HEK293 (cell line): ENCODE measurements at regions of chr11 and their contacts with region 1.

Region 1: GRCh38 chr11:72471005-72471898 is 36.9 kb upstream of the CLPB start:
- H3K4me3 ChIP-seq: no peak overlapping the region
- H3K27ac ChIP-seq: no peak overlapping the region
- H3K4me1 ChIP-seq: no peaks in the 10 kb centered on the region
- CTCF ChIP-seq: peak; percentile 67

Region 2: GRCh38 chr11:72333661-72334060 is 137.6 kb before region 1 on chr11:
- CTCF ChIA-PET with region 1: no interaction called
- POLR2A ChIA-PET with region 1: no interaction called
- H3K4me3 ChIP-seq: no peak overlapping the region
- H3K27ac ChIP-seq: no peak overlapping the region
- H3K4me1 ChIP-seq: no peaks in the 10 kb centered on the region
- CTCF ChIP-seq: peak; percentile 27; the same call in 1 of the 2 replicates

Region 3: GRCh38 chr11:72454791-72455190 is 16.5 kb before region 1 on chr11:
- CTCF ChIA-PET with region 1: interaction called, 25 read pairs
- POLR2A ChIA-PET with region 1: no interaction called
- H3K4me3 ChIP-seq: no peak overlapping the region
- H3K27ac ChIP-seq: no peak overlapping the region
- H3K4me1 ChIP-seq: no peaks in the 10 kb centered on the region
- CTCF ChIP-seq: no peak

Region 4: GRCh38 chr11:72483412-72484186 is 12.3 kb after region 1 on chr11:
- CTCF ChIA-PET with region 1: interaction called, 25 read pairs
- POLR2A ChIA-PET with region 1: no interaction called
- H3K4me3 ChIP-seq: no peak overlapping the region
- H3K27ac ChIP-seq: no peak overlapping the region
- H3K4me1 ChIP-seq: no peaks in the 10 kb centered on the region
- CTCF ChIP-seq: no peak

Region 5: DNA sequence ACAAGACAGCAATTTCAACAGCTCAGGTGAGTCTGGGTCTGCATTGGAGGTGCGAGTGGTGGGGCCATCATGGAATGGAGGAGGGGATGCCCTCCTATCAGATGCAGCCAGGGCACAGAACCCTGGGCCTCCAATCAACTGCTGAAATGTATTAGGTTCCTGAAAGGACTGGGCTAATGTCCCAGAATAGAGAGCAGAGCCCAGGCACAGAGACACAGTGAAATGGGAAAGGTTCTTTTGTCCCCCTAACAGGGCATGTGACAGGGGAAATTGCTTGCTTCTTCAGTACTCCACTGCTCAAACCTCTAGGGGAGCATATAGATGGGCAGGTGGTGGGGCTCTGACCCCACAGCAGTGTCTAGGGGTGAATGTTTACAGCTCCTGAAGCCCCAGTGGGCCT is 50.4 kb after region 1 on chr11:
- CTCF ChIA-PET with region 1: interaction called, 13 read pairs
- POLR2A ChIA-PET with region 1: no interaction called
- H3K4me3 ChIP-seq: no peak overlapping the region
- H3K27ac ChIP-seq: no peak overlapping the region
- H3K4me1 ChIP-seq: no peaks in the 10 kb centered on the region
- CTCF ChIP-seq: no peak

Region 6: DNA sequence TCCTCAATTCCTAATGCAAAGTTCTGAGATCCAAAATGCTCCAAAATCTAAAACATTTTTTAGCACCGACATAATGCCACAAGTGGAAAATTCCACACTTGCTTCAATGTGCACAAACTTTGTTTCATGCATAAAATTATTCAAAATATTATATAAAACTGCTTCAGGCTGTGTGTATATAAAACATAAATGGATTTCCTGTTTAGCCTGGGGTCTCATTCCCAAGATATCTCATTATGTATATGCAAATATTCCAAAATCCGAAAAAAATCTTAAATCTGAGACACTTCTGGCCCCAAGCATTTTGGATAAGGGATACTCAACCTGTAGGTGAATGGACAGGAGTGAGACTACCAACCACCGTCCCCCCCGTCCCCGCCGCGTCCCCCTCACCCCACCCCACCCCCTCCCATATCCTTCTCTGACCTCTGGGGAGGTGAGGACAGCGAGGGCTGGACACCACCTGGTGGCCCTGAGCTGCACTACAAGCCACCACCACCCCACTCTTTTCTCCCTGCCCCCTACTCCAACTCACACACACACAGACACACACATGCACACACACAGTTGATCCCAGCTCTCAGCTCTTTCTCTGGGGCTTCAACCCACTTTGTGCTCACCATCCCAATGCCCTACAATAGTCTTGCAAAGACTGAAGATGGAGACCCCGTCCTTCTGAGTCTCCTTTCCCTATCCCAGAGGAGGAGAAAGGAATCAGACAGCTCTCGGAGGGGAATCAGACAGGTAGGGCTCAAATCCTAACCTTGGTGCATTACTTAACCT is 102.0 kb after region 1 on chr11:
- CTCF ChIA-PET with region 1: interaction called, 36 read pairs
- POLR2A ChIA-PET with region 1: no interaction called
- H3K4me3 ChIP-seq: no peak overlapping the region
- H3K27ac ChIP-seq: no peak overlapping the region
- H3K4me1 ChIP-seq: no peaks in the 10 kb centered on the region; the same call in 1 of the 2 replicates
- CTCF ChIP-seq: peak; percentile 54; the same call in 1 of the 2 replicates

Region 7: DNA sequence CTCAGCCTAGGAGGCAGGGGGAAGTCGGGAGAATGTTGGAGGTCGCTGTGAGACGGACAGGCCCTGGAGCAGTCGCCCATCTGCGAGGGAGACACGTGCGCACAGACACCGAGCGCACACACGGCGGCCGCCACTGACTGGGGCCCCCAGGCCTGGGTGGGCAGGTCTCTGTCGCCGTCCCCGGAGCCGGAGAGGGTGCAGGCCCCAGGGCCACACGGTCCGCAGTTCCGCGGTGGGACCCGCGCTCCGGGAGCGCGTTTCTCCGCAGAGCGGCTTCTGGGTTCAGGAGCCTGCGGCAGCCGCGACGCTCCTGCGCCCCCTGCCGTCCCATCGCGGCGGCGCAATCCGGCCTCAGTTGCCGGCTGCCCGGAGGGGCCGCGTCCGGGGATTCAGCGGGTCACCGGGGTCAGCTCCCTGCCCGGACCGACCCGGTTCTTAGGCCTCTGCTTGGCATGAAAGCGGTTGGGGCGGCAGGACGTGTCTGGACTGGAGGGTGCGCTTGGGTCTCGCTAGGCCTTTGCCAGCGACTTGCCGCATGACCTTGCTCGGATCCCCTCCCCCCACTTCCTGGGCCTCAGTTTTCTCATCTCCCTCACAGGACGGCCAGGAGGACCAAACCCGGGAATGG is 171.7 kb after region 1 on chr11:
- CTCF ChIA-PET with region 1: interaction called, 11 read pairs
- POLR2A ChIA-PET with region 1: no interaction called
- H3K4me3 ChIP-seq: peak overlapping the region; percentile 39
- H3K27ac ChIP-seq: no peak overlapping the region
- H3K4me1 ChIP-seq: no peaks in the 10 kb centered on the region
- CTCF ChIP-seq: peak; percentile 88